ENCODE measurements at regions of chr3 and their contacts with region 1.

Region 1: GRCh38 chr3:44036850-44037249 is 204.8 kb upstream of the TOPAZ1 start:
- DNase-seq: no peak
- ATAC-seq: no peak
- H3K4me3 ChIP-seq: no peak overlapping the region
- H3K27ac ChIP-seq: no peak overlapping the region
- H3K4me1 ChIP-seq: no peaks in the 10 kb centered on the region
- H3K27me3 ChIP-seq: no peaks in the 10 kb centered on the region
- CTCF ChIP-seq: no peak
- POLR2A ChIP-seq: no peak

Region 2: GRCh38 chr3:44048949-44049348 is 12.1 kb after region 1 on chr3:
- in situ Hi-C with region 1: no loop called
- intact Hi-C with region 1: loop called (anchors 1 kb)
- DNase-seq: no peak
- ATAC-seq: no peak
- H3K4me3 ChIP-seq: no peak overlapping the region
- H3K27ac ChIP-seq: no peak overlapping the region
- H3K4me1 ChIP-seq: no peaks in the 10 kb centered on the region
- H3K27me3 ChIP-seq: no peaks in the 10 kb centered on the region
- CTCF ChIP-seq: no peak
- POLR2A ChIP-seq: no peak

Measured in gastrocnemius medialis (tissue), 4 donors.